Sigmoid colon (tissue), 7 donors: ENCODE measurements at regions of chr10 and their contacts with region 1.

Region 1: GRCh38 chr10:17430647-17431355 is 23.6 kb downstream of the ST8SIA6 start:
- DNase-seq: peak; percentile 75
- H3K4me3 ChIP-seq: no peak overlapping the region
- H3K27ac ChIP-seq: no peak overlapping the region
- H3K4me1 ChIP-seq: no peaks in the 10 kb centered on the region
- H3K27me3 ChIP-seq: peaks cover 0 to 18% (median 4%) of the 10 kb centered on the region in 3 donors
- CTCF ChIP-seq: peak; percentile 8 to 78 (median 68)
- EP300 ChIP-seq: no peak
- POLR2A ChIP-seq: no peak

Region 2: DNA sequence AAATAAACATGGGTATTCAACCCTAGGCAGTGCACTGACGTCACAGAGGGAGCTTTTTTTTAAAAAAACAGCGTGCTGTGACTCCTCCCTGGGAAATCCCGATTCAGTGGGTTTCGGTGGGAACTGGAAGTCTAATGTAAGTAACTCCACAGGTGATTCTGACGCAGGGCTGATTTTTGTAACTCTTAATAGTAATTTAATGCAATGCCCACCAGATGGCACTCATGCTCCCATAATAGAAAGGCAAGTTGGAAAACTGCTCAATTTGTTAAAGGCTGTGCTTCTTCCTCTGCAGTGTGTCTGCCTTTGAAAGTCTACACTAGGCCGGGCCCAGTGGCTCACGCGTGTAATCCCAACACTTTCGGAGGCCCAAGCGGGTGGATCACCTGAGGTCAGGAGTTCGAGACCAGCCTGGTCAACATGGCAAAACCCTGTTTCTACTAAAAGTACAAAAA is 602.7 kb before region 1 on chr10:
- intact Hi-C with region 1: loop called (anchors 1 kb)
- DNase-seq: peak; percentile 71
- H3K4me3 ChIP-seq: no peak overlapping the region
- H3K27ac ChIP-seq: peak overlapping the region in 2 of 4 donors; percentile 32 to 52
- H3K4me1 ChIP-seq: peaks cover 0 to 7% (median 3%) of the 10 kb centered on the region in 4 donors
- H3K27me3 ChIP-seq: no peaks in the 10 kb centered on the region
- CTCF ChIP-seq: peak; percentile 32 to 66 (median 50)
- EP300 ChIP-seq: no peak
- POLR2A ChIP-seq: no peak

Region 3: DNA sequence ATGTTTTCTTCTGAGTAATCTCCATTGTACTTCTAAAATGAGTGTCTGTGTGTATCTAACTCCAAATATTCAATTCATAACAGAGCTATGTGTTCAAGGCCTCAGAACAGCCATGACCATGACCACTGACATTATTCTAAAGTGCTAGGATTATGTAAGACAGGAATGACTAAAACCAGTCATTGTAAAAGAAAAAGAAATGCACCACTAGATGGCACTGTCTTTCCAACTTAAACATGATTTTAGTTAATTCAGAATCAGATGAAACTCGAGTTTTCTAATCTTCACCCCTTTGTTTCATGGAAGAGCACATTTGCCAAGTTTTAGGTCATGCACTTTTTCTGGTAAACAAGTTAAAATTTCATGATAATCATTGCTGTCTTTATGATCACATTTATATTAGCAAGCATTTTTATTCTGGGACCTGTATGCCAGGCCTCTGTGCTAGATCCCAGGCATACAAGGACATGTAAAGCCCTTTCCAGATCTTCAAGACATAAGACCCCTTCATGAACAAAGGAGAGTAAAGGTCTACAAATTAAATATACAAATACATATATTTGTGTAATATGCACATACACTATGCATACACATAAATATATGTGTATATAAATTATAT is 587.4 kb before region 1 on chr10:
- intact Hi-C with region 1: loop called (anchors 5 kb)
- DNase-seq: no peak
- H3K4me3 ChIP-seq: no peak overlapping the region
- H3K27ac ChIP-seq: no peak overlapping the region
- H3K4me1 ChIP-seq: no peaks in the 10 kb centered on the region
- H3K27me3 ChIP-seq: no peaks in the 10 kb centered on the region
- CTCF ChIP-seq: peak in 3 of 4 experiments; percentile 28 to 61 (median 31)
- EP300 ChIP-seq: no peak
- POLR2A ChIP-seq: no peak

Region 4: DNA sequence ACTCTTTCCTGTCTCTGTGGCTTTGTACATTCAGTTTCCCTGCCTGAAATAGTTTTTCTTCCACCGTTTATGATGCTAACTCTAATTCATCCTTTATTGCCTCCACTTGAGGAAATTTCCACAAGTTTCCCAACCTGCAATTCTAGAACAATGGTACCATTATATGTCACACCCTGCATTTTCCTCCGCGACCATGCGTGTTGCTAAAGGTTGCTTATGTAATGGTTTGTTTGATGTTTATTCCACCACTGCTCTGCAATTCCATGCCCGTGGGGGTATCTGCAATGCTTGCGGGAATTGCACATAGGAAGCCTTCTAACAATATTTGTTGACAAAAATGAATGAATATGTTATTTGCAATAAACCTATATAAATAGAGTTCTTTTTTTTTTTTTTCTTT is 93.1 kb after region 1 on chr10:
- intact Hi-C with region 1: no loop called
- DNase-seq: no peak
- H3K4me3 ChIP-seq: no peak overlapping the region
- H3K27ac ChIP-seq: no peak overlapping the region
- H3K4me1 ChIP-seq: no peaks in the 10 kb centered on the region
- H3K27me3 ChIP-seq: no peaks in the 10 kb centered on the region
- CTCF ChIP-seq: no peak
- EP300 ChIP-seq: no peak
- POLR2A ChIP-seq: no peak